Breast epithelium (tissue), 4 donors: ENCODE measurements at regions of chr6 and their contacts with region 1.

Region 1: DNA sequence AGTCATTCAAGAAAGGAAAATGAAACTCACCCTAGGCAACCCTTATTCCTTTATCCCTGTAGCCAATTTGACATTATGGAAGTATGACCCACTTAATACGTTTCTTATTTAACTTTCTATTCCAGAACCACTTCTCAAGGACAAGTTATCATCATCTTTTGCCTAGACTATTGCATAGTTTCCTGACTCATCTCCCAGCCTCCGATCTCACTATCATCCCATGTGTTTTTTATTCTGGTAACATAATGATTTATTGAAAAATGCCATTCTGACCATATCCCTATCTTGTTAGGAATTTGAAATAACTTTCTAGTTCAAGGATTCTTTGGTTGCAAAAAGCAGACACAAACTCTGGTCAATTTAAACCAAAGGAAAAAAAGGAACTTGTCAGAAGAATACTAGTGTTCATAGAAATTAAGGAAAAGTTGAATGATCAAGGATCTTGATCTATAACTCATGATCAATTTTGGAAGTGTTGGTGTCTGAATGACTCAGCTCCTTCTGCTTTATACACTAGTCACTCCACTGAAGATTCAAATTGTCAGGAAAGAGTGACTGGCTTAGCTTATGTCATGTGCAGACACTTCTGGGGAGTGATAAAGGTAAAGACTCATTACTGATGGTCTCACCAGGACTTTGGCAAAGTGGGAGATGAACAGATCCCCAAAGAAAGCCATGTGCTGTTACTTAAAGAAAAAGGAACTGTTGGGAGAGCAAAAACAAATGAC is 8.5 kb upstream of the TINAG start:
- DNase-seq: no peak
- H3K4me3 ChIP-seq: no peak overlapping the region
- H3K27ac ChIP-seq: no peak overlapping the region
- H3K4me1 ChIP-seq: no peaks in the 10 kb centered on the region
- H3K27me3 ChIP-seq: no peaks in the 10 kb centered on the region
- CTCF ChIP-seq: no peak
- POLR2A ChIP-seq: no peak

Region 2: GRCh38 chr6:54151861-54152260 is 147.8 kb before region 1 on chr6:
- intact Hi-C with region 1: loop called (anchors 5 kb)
- DNase-seq: no peak
- H3K4me3 ChIP-seq: no peak overlapping the region
- H3K27ac ChIP-seq: no peak overlapping the region
- H3K4me1 ChIP-seq: no peaks in the 10 kb centered on the region
- H3K27me3 ChIP-seq: no peaks in the 10 kb centered on the region
- CTCF ChIP-seq: no peak
- POLR2A ChIP-seq: no peak

Region 3: GRCh38 chr6:54874337-54875023 is 574.8 kb after region 1 on chr6:
- intact Hi-C with region 1: loop called (anchors 5 kb)
- DNase-seq: no peak
- H3K4me3 ChIP-seq: no peak overlapping the region
- H3K27ac ChIP-seq: no peak overlapping the region
- H3K4me1 ChIP-seq: no peaks in the 10 kb centered on the region
- H3K27me3 ChIP-seq: no peaks in the 10 kb centered on the region
- CTCF ChIP-seq: no peak
- POLR2A ChIP-seq: no peak